RWPE1 (cell line): ENCODE measurements at regions of chr1 and their contacts with region 1.

Region 1: GRCh38 chr1:204506961-204507387 is 9.2 kb upstream of the MDM4 start:
- DNase-seq: peak; percentile 74
- H3K27ac ChIP-seq: peak overlapping the region; percentile 91
- CTCF ChIP-seq: no peak

Region 2: DNA sequence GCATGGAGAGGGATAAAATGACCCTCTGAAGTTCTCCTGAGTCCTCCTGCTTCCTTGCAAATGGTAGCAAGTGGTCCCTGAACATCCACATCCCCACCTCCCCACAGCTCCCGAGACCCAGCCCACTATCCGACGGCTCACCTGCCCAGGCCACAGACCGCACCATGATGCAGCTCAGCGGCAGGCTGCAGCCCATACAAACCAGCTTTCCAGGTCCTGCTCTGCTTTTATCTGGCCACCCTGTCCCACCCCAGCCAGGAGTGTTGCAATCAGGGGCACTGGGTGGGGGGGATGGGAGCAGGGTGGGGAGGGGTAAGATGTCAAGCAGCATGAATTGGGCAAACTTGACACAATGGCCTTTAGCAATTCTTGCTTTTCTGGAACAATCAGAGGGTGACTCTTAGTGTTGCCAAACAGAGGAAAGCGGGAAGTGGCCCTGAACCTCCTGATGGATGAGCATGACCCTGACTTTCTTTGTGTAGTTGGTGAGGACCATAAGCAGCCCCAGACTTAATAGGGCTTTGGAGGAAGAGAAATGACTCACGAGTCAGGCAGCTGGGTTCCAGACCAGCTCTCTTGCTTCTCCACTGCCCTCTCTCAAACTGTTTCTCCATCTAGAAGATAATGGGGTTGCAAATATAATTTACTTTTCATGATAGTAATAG is 1277.4 kb before region 1 on chr1 and contains the start of gene CHIT1:
- CTCF ChIA-PET with region 1: no interaction called
- POLR2A ChIA-PET with region 1: no interaction called
- DNase-seq: no peak
- H3K27ac ChIP-seq: no peak within 1 kb of the TSS
- CTCF ChIP-seq: no peak

Region 3: GRCh38 chr1:204171751-204172178 is 335.2 kb before region 1 on chr1:
- CTCF ChIA-PET with region 1: no interaction called
- POLR2A ChIA-PET with region 1: no interaction called
- DNase-seq: peak; percentile 98
- H3K27ac ChIP-seq: no peak overlapping the region
- CTCF ChIP-seq: no peak

Region 4: DNA sequence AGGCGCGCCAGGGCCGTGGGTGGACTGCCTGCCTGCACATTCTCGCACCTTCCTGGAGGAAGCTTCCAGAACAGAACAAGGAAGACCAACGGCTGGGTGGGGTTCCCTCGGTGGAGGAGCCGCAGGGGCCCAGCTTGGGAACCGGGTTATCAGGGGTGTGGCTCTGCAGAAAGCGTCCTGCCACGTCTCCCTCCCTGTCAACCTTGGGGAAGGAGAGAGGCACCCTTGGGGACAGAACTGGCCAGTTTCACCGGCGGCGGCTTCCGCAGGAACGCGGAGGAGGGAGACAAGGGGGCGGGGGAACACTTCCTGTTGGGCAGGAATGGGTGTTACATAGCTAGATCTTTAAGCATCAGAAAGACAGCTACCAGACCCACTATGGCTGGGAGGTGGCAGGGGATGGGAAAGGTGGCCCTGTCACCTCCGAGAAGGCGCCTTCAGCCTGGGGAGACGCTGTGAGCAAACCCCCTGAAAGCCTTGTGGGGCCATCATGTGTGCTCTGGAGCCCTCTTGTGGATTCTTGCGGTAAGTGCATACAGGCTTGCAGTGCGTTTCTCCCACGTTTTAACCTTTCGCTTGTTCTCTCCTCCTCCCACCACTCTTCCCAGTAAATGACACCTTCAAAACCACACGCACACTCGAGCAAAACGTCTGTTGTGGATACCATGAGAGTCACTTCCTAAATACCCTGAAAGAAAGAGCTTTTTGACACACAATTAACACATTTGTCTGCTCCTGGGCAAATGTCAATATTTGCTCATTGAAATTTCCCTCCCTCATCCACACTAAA is 143.4 kb before region 1 on chr1:
- CTCF ChIA-PET with region 1: interaction called, 19 read pairs
- POLR2A ChIA-PET with region 1: no interaction called
- DNase-seq: peak; percentile 81
- H3K27ac ChIP-seq: peak overlapping the region; percentile 48
- CTCF ChIP-seq: peak; percentile 93

Region 5: DNA sequence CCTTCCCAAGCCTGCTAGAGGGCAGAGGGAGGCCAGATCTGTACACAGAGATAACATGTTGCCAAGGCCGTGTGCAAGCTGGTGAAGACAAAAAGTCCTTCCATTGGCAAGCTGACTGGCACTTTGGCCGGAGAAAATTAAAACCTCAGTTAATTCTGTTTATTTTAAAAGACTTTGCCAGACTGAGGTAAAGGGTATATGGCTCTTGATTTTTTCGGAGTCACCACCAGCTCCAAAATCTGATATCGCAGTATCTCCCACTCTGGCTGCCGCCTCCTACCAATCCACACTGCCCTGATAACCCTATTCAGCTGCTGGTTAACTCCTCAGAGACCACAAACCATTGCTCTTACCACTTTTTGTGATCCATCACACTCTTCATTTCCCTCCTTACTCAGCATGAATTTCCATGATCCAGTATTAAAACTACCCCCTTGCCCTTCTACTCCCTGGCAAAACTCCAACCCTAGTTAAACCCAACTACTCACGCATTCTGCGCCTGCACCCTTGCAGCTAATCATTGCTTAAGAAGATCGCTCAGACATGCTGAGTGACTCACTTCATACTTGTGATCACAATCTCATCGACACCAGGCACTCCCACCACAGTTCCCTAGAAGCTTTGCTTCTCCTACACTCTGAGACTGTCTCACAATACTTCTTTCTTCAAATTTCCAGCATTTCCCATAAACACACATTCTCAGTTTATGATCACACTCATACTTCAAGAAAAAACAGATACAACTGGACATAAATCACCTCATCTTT is 89.6 kb before region 1 on chr1:
- CTCF ChIA-PET with region 1: interaction called, 10 read pairs
- POLR2A ChIA-PET with region 1: no interaction called
- DNase-seq: peak; percentile 97
- H3K27ac ChIP-seq: peak overlapping the region; percentile 92
- CTCF ChIP-seq: no peak

Region 6: DNA sequence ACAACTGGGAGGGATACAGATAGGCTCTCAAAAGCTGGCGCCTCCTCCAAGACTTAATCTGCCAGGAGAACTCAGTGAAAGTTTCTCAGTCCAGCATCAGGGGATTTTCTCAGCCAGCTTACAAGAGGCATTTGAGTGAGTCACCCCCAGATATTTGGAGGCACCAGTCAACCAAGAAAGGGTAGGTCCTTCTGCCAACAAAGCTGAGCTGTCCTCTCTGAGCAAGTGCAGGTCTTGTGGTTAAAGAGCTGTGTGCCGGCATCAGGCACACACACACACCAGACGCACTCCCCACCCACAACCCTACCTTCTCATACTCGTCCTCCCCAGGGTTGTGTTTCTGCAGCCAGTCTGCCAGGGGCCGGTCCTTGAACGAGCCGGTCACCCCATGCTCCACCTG is 68.3 kb before region 1 on chr1:
- CTCF ChIA-PET with region 1: interaction called, 14 read pairs
- POLR2A ChIA-PET with region 1: no interaction called
- DNase-seq: peak; percentile 98
- H3K27ac ChIP-seq: peak overlapping the region; percentile 80
- CTCF ChIP-seq: no peak

Region 7: DNA sequence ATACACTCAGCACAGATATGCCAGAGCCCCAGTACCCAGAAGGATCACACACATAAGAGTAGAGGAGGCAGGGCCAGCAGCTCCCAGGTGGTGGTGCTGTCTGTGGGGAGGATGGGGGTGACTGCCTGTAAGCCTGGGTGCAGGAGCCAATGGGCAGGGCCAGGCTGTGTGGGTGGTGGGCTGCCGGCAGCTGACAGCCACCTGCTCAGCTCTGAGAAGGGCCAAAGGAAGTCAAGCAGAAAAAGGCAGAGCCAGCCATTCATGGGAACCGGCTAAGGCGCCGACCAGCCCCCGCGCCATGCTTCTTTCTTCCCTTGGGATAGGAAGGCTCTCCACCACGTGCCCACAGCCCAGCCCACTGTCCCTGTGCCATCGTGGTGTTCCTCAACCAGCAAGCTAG is 26.5 kb before region 1 on chr1:
- CTCF ChIA-PET with region 1: interaction called, 14 read pairs
- POLR2A ChIA-PET with region 1: no interaction called
- DNase-seq: no peak
- H3K27ac ChIP-seq: no peak overlapping the region
- CTCF ChIP-seq: no peak

Region 8: GRCh38 chr1:204545881-204546280 is 38.9 kb after region 1 on chr1:
- CTCF ChIA-PET with region 1: no interaction called
- POLR2A ChIA-PET with region 1: no interaction called
- DNase-seq: no peak
- H3K27ac ChIP-seq: no peak overlapping the region
- CTCF ChIP-seq: no peak

Region 9: DNA sequence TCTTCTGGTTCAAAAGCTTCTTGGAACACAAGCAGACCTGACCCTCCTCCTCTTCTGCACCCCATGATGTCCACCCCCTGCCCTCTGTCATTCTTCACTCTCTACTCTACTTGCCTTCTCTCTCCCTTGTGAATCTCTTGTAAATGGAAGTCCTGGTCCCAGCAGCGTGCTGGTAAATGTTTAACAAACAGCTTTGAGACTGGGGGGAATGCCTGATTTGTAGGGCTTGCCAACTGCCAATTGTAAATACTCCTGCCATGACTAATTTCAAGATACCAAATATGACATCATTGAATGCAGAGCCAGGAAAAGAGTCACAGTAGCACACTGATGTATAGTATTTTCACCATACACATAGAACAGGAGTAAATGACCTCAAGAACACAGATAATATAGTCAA is 219.5 kb after region 1 on chr1:
- CTCF ChIA-PET with region 1: no interaction called
- POLR2A ChIA-PET with region 1: no interaction called
- DNase-seq: peak; percentile 91
- H3K27ac ChIP-seq: no peak overlapping the region
- CTCF ChIP-seq: no peak